ENCODE measurements at regions of chr12 and their contacts with region 1.

Region 1: GRCh38 chr12:62581288-62582064 is 114.8 kb downstream of the MON2 start:
- DNase-seq: no peak
- H3K4me3 ChIP-seq: no peak overlapping the region
- H3K27ac ChIP-seq: no peak overlapping the region
- H3K4me1 ChIP-seq: no peaks in the 10 kb centered on the region
- H3K27me3 ChIP-seq: no peaks in the 10 kb centered on the region
- CTCF ChIP-seq: peak; percentile 59 to 79 (median 72)
- POLR2A ChIP-seq: no peak

Region 2: GRCh38 chr12:62537551-62537950 is 43.9 kb before region 1 on chr12:
- intact Hi-C with region 1: no loop called
- DNase-seq: peak in 6 of 7 donors; percentile 22 to 70 (median 55)
- H3K4me3 ChIP-seq: no peak overlapping the region
- H3K27ac ChIP-seq: no peak overlapping the region
- H3K4me1 ChIP-seq: peaks cover 10 to 11% of the 10 kb centered on the region in 2 donors
- H3K27me3 ChIP-seq: no peaks in the 10 kb centered on the region
- CTCF ChIP-seq: no peak
- POLR2A ChIP-seq: no peak

Region 3: DNA sequence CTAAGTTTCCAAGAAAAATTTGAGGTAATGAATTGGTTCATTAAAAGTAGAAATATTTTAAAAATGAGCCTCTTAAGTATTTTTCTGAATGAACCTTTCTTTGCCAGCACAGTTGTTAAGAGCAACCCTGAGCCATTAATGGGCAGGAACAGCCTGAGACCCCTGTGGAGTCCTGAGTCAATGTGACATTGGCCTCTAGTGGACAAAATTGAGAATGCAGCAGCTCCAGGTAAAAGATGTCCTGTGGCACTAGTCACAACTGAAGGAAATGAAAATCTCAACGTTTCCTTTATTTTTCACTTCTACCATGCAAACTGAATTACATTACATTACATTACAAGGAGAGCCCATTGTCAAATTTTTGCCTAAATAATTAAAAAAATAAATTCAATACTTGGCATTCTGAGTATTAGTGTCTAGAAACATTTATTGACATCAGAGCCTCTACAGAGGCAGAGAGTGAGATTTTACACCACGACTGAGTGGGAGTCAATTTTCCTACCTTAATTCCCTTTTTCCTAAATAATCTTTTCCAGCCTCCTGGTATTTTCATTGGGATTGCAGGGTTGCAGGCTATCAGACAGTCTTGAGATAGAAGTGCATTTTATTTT is 217.8 kb after region 1 on chr12:
- intact Hi-C with region 1: loop called in 1 of 2 experiments (anchors 5 kb)
- DNase-seq: peak; percentile 31 to 79 (median 58)
- H3K4me3 ChIP-seq: no peak overlapping the region
- H3K27ac ChIP-seq: no peak overlapping the region
- H3K4me1 ChIP-seq: no peaks in the 10 kb centered on the region
- H3K27me3 ChIP-seq: no peaks in the 10 kb centered on the region
- CTCF ChIP-seq: peak; percentile 85 to 96 (median 88)
- POLR2A ChIP-seq: no peak

Region 4: DNA sequence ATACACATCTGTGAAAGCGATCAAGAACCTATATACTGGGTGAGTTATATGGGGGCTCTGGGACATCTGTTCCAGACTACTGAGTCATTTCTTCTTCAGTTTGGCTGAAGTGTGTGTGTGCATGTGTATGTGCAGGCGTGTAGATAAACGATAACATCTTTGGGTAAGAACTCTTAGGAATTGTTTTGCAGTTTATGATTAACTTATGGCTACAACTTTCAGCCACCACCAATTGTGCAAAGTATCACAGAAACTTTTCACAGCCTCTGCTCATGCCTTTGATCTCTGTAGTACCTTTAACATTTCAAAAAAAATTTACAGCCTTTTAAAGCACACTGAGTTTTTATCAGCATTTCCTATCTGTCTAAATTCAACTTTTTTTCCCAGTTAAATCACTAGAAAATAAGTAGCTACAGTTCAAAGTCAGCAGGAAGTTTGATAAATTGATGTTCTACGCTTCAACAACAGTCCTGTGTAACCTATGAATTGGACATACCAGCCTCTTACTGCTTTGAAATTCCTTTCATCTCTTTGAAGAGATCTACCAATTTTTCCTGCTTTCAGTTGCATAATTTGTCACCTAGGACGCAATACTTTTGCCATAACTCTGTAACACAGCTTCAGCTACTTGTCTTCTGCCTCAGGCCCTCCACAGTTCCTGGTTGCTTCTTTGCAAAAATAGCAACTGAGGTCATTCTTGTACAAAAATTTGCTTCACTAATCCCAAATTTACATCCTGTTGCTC is 310.5 kb after region 1 on chr12:
- intact Hi-C with region 1: no loop called
- DNase-seq: no peak
- H3K4me3 ChIP-seq: no peak overlapping the region
- H3K27ac ChIP-seq: no peak overlapping the region
- H3K4me1 ChIP-seq: no peaks in the 10 kb centered on the region
- H3K27me3 ChIP-seq: no peaks in the 10 kb centered on the region
- CTCF ChIP-seq: no peak
- POLR2A ChIP-seq: no peak

Region 5: DNA sequence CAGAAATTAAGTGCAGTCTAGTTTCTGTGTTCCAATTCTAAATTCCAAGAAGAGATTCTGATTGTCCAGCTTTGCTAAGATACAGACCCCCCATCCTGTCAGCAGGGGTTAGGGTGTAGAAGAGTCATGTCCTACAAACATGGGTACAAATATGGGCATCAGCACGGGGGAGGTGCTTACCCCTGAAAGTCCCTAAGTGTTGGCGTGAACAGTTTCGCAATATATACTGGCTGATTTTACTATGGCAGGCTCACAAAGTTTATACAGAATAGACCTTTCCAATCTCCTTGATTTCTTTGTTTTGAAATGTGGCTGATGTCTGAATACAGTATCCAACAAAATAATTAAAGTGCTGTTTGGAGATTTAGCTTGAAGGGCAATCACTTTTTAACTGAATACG is 425.1 kb after region 1 on chr12:
- intact Hi-C with region 1: no loop called
- DNase-seq: no peak
- H3K4me3 ChIP-seq: no peak overlapping the region
- H3K27ac ChIP-seq: no peak overlapping the region
- H3K4me1 ChIP-seq: no peaks in the 10 kb centered on the region
- H3K27me3 ChIP-seq: no peaks in the 10 kb centered on the region
- CTCF ChIP-seq: no peak
- POLR2A ChIP-seq: no peak

Region 6: DNA sequence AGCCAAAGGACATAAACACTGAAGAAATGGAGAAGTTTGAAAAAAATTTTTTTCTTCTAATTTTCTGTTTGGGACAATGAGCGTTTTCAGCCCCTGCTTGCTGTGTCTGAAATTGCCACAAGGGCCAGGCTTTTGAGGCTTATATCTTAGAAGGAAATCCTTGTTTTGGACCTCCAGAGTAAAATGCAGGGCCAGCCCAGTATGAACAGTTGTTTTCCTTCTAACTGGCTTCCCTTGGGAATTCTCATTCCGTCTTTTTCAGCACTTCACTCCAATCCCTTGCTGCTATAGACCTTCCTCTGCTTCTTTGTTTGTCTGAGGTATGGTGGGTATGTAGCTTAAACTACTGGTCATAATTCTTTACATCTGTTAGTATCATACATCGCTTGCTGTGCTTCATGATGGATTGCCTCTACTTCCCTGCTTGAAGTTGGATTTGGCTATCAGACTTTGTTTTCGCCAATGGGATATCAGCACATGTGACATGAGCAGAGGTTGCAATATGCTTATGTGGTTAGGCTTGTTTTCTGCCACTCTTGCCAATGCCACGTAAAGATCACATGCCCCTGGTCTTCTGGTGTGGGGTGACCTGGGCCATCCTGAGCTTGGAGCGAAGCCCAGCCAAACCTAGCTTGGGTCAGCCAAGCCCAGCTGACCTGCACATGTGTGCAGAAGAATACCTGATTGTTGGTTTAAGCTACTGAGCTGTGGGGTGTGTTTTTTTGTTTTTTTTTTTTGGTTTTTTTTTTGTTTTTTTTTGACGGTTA is 504.9 kb after region 1 on chr12:
- intact Hi-C with region 1: no loop called
- DNase-seq: no peak
- H3K4me3 ChIP-seq: no peak overlapping the region
- H3K27ac ChIP-seq: no peak overlapping the region
- H3K4me1 ChIP-seq: no peaks in the 10 kb centered on the region
- H3K27me3 ChIP-seq: no peaks in the 10 kb centered on the region
- CTCF ChIP-seq: no peak
- POLR2A ChIP-seq: no peak

Measured in adrenal gland (tissue), 19 donors.